Transverse colon (tissue), 4 donors: ENCODE measurements at regions of chr16 and their contacts with region 1.

Region 1: GRCh38 chr16:84726079-84726668 is 26.4 kb downstream of the USP10 start:
- DNase-seq: peak; percentile 93
- H3K4me3 ChIP-seq: peak overlapping the region in 1 of 4 donors; percentile 24
- H3K27ac ChIP-seq: peak overlapping the region; percentile 73 to 76 (median 74)
- H3K4me1 ChIP-seq: peaks cover 13 to 75% (median 51%) of the 10 kb centered on the region in 4 donors
- H3K27me3 ChIP-seq: no peaks in the 10 kb centered on the region
- CTCF ChIP-seq: peak; percentile 92 to 94 (median 93)
- EP300 ChIP-seq: no peak
- POLR2A ChIP-seq: no peak

Region 2: DNA sequence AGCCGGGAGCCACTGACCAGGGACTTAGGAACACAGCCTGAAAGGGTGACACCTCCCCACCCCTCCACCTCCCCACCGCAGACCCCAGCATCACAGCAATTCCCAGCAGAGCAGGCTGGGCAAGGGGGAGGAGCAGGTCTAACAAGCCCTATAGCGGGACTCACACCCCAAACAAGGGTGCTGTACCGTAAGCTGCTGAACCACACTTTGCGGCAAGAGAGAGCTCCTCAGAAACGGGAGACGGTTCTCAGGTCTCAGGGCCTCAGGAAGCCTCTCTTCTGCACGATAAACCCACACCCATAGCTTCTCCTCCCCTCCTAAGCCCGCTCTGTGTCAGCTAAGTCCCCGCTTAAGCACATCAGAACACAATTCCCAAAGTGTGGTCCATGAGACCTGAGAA is 96.6 kb before region 1 on chr16:
- in situ Hi-C with region 1: loop called in 2 of 4 experiments (anchors 10 kb)
- intact Hi-C with region 1: no loop called
- DNase-seq: no peak
- H3K4me3 ChIP-seq: no peak overlapping the region
- H3K27ac ChIP-seq: no peak overlapping the region
- H3K4me1 ChIP-seq: no peaks in the 10 kb centered on the region
- H3K27me3 ChIP-seq: no peaks in the 10 kb centered on the region
- CTCF ChIP-seq: no peak
- EP300 ChIP-seq: no peak
- POLR2A ChIP-seq: no peak

Region 3: DNA sequence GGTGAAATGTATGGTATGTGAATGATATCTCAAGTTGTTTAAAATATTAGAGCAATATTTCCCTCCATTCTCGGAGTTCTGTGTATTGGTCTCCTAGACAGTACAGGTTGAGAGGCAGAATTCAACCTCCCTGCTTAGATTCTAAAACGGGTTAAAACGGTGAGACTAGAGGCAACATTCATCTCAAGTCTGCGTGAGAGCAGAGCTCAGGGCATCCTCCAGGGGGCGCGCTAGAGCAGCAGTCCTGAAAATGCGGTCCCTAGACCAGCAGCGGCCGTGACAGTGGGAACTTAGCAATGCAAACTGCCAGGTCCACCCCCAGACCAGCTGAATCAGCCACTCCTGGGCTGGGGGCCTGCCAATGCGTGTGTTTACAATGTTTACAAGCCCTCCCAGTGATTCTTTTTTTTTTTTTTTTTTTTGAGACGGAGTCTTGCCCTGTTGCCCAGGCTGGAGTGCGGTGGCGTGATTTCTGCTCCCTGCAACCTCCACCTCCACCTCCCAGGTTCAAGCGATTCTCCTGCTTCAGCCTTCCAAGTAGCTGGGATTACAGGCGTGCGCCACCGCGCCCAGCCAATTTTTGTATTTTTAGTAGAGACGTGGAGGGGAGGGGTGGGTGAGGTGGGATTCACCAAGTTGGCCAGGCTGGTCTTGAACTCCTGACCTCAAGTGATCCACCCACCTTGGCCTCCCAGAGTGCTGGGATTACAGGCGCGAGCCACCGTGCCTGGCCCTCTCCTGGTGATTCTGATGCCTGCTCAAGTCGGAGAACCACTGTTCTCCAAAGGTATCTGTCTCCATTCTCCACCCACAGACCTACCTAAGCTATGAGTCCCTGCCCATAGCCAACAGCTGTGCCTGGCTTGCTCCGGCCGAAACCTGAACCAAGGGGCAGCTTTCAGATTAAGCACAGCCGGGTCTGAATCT is 53.6 kb before region 1 on chr16:
- in situ Hi-C with region 1: loop called in 1 of 4 experiments (anchors 5 kb)
- intact Hi-C with region 1: loop called (anchors 5 kb)
- DNase-seq: peak; percentile 83
- H3K4me3 ChIP-seq: no peak overlapping the region
- H3K27ac ChIP-seq: no peak overlapping the region
- H3K4me1 ChIP-seq: peaks cover 0 to 3% (median 0%) of the 10 kb centered on the region in 4 donors
- H3K27me3 ChIP-seq: no peaks in the 10 kb centered on the region
- CTCF ChIP-seq: peak; percentile 90 to 96 (median 94)
- EP300 ChIP-seq: no peak
- POLR2A ChIP-seq: no peak

Region 4: DNA sequence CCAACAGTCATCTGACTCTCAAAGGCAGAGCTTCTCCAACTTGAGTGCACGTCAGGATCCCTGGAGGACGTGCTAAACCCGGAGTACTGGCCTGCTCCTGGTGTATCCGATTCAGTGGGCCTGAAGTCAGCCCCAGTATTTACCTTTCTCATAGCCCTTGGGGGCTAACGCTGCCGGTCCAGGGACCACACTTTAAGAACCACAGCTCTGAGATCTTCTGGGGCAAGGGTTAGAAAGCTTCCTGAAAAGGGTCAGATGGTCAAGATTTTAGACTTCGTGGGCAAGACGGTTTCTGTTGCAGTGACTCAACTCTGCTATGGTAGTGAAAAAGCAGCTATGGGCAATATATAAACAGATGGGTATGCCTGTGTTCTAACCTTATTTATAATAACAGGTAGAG is 41.0 kb before region 1 on chr16:
- in situ Hi-C with region 1: no loop called
- intact Hi-C with region 1: no loop called
- DNase-seq: no peak
- H3K4me3 ChIP-seq: no peak overlapping the region
- H3K27ac ChIP-seq: no peak overlapping the region
- H3K4me1 ChIP-seq: no peaks in the 10 kb centered on the region
- H3K27me3 ChIP-seq: no peaks in the 10 kb centered on the region
- CTCF ChIP-seq: no peak
- EP300 ChIP-seq: no peak
- POLR2A ChIP-seq: no peak